ENCODE measurements at regions of chr9 and their contacts with region 1.

Region 1: GRCh38 chr9:79129865-79130480 is 441.8 kb upstream of the TLE4 start:
- DNase-seq: peak; percentile 67
- ATAC-seq: peak; percentile 88
- H3K4me3 ChIP-seq: no peak overlapping the region
- H3K27ac ChIP-seq: no peak overlapping the region
- H3K4me1 ChIP-seq: no peaks in the 10 kb centered on the region; the same call in 1 of the 2 replicates
- H3K27me3 ChIP-seq: no peaks in the 10 kb centered on the region
- CTCF ChIP-seq: peak; percentile 92
- POLR2A ChIP-seq: 0 out of 2 replicates have a peak, but pooled peaks have one; percentile 25
- RAD21 ChIP-seq: peak; percentile 98

Region 2: GRCh38 chr9:78439190-78439865 is 690.6 kb before region 1 on chr9:
- CTCF ChIA-PET with region 1: no interaction called
- POLR2A ChIA-PET with region 1: no interaction called
- dilution Hi-C with region 1: no loop called
- in situ Hi-C with region 1: loop called (anchors 25 kb)
- intact Hi-C with region 1: loop called (anchors 1 kb)
- DNase-seq: peak; percentile 89
- ATAC-seq: peak; percentile 97
- H3K4me3 ChIP-seq: peak overlapping the region; percentile 5; the same call in 1 of the 2 replicates
- H3K27ac ChIP-seq: no peak overlapping the region
- H3K4me1 ChIP-seq: no peaks in the 10 kb centered on the region
- H3K27me3 ChIP-seq: peaks cover 14% of the 10 kb centered on the region
- CTCF ChIP-seq: peak; percentile 95
- POLR2A ChIP-seq: peak; percentile 30; the same call in 1 of the 2 replicates
- RAD21 ChIP-seq: peak; percentile 97

Region 3: GRCh38 chr9:78820855-78821822 is 308.8 kb before region 1 on chr9:
- CTCF ChIA-PET with region 1: no interaction called
- POLR2A ChIA-PET with region 1: no interaction called
- dilution Hi-C with region 1: no loop called
- in situ Hi-C with region 1: no loop called
- intact Hi-C with region 1: loop called (anchors 10 kb)
- DNase-seq: peak; percentile 42
- ATAC-seq: peak; percentile 71
- H3K4me3 ChIP-seq: peak overlapping the region; percentile 39; the same call in 1 of the 2 replicates
- H3K27ac ChIP-seq: no peak overlapping the region
- H3K4me1 ChIP-seq: no peaks in the 10 kb centered on the region
- H3K27me3 ChIP-seq: no peaks in the 10 kb centered on the region
- CTCF ChIP-seq: peak; percentile 54
- POLR2A ChIP-seq: no peak
- RAD21 ChIP-seq: peak; percentile 48

Region 4: DNA sequence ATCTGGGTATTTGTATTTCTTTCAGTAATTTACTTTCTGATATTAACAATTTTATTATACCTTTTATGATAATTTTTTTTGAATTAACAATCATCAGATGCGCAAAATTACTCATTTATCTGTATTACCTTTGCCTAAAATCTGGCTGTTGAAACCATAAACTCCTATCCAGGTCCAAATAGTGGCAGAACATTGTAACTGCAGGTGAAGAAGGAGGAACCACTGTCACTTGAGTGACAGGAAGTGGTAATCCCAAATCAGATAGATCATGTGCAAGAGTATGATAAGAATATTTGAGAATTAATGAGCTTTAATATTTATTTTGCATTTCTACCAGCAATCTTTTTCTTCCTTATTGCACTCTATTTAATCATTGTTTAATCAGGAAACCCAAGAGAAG is 302.5 kb after region 1 on chr9:
- CTCF ChIA-PET with region 1: no interaction called
- POLR2A ChIA-PET with region 1: no interaction called
- dilution Hi-C with region 1: no loop called
- in situ Hi-C with region 1: no loop called
- intact Hi-C with region 1: loop called (anchors 5 kb)
- DNase-seq: no peak
- ATAC-seq: no peak
- H3K4me3 ChIP-seq: no peak overlapping the region
- H3K27ac ChIP-seq: no peak overlapping the region
- H3K4me1 ChIP-seq: no peaks in the 10 kb centered on the region
- H3K27me3 ChIP-seq: no peaks in the 10 kb centered on the region
- CTCF ChIP-seq: no peak
- POLR2A ChIP-seq: no peak
- RAD21 ChIP-seq: no peak

Region 5: GRCh38 chr9:79719989-79720388 is 590.0 kb after region 1 on chr9:
- CTCF ChIA-PET with region 1: no interaction called
- POLR2A ChIA-PET with region 1: no interaction called
- dilution Hi-C with region 1: no loop called
- in situ Hi-C with region 1: no loop called
- intact Hi-C with region 1: loop called (anchors 5 kb)
- DNase-seq: no peak
- ATAC-seq: no peak
- H3K4me3 ChIP-seq: no peak overlapping the region
- H3K27ac ChIP-seq: no peak overlapping the region
- H3K4me1 ChIP-seq: peaks cover 2% of the 10 kb centered on the region
- H3K27me3 ChIP-seq: no peaks in the 10 kb centered on the region
- CTCF ChIP-seq: no peak
- POLR2A ChIP-seq: no peak
- RAD21 ChIP-seq: no peak